GM12878 (cell line): ENCODE measurements at regions of chr10 and their contacts with region 1.

Region 1: GRCh38 chr10:86376852-86377796 is 10.5 kb upstream of the GRID1 start:
- DNase-seq: no peak
- ATAC-seq: peak; percentile 99
- H3K4me3 ChIP-seq: 0 out of 2 replicates have a peak overlapping the region, but pooled peaks have one; percentile 32
- H3K27ac ChIP-seq: no peak overlapping the region
- H3K4me1 ChIP-seq: no peaks in the 10 kb centered on the region
- H3K27me3 ChIP-seq: no peaks in the 10 kb centered on the region; a peak in 1 of 4 replicates
- CTCF ChIP-seq: peak; percentile 91 to 92 (median 91); a peak in 5 of 6 replicates
- EP300 ChIP-seq: no peak
- POLR2A ChIP-seq: no peak
- RAD21 ChIP-seq: peak; percentile 74

Region 2: GRCh38 chr10:85548034-85548433 is 829.1 kb before region 1 on chr10:
- CTCF ChIA-PET with region 1: no interaction called
- POLR2A ChIA-PET with region 1: no interaction called
- RAD21 ChIA-PET with region 1: no interaction called
- SMC1A ChIA-PET with region 1: no interaction called
- in situ Hi-C with region 1: loop called (anchors 10 kb)
- intact Hi-C with region 1: loop called (anchors 5 kb)
- DNase-seq: peak; percentile 35
- ATAC-seq: peak; percentile 96
- H3K4me3 ChIP-seq: no peak overlapping the region
- H3K27ac ChIP-seq: no peak overlapping the region
- H3K4me1 ChIP-seq: no peaks in the 10 kb centered on the region; the same call in 1 of the 2 replicates
- H3K27me3 ChIP-seq: no peaks in the 10 kb centered on the region
- CTCF ChIP-seq: peak; percentile 34 to 47 (median 38); a peak in 4 of 6 replicates
- EP300 ChIP-seq: no peak
- POLR2A ChIP-seq: no peak
- RAD21 ChIP-seq: peak; percentile 58

Region 3: GRCh38 chr10:85995791-85996190 is 381.3 kb before region 1 on chr10:
- CTCF ChIA-PET with region 1: interaction called, 3 read pairs
- POLR2A ChIA-PET with region 1: no interaction called
- RAD21 ChIA-PET with region 1: no interaction called
- SMC1A ChIA-PET with region 1: no interaction called
- in situ Hi-C with region 1: no loop called
- intact Hi-C with region 1: loop called (anchors 1 kb)
- DNase-seq: peak; percentile 20
- ATAC-seq: peak; percentile 83
- H3K4me3 ChIP-seq: no peak overlapping the region
- H3K27ac ChIP-seq: no peak overlapping the region
- H3K4me1 ChIP-seq: no peaks in the 10 kb centered on the region
- H3K27me3 ChIP-seq: 0 out of 4 replicates have a peak, but pooled peaks cover 0 to 2% of the 10 kb centered on the region in 2 experiments
- CTCF ChIP-seq: peak; percentile 43 to 64 (median 49); a peak in 5 of 6 replicates
- EP300 ChIP-seq: no peak
- POLR2A ChIP-seq: no peak
- RAD21 ChIP-seq: peak; percentile 45

Region 4: GRCh38 chr10:86261941-86262687 is 115.0 kb before region 1 on chr10:
- CTCF ChIA-PET with region 1: interaction called, 5 read pairs
- POLR2A ChIA-PET with region 1: no interaction called
- RAD21 ChIA-PET with region 1: no interaction called
- SMC1A ChIA-PET with region 1: no interaction called
- in situ Hi-C with region 1: no loop called
- intact Hi-C with region 1: loop called (anchors 1 kb)
- DNase-seq: peak; percentile 21
- ATAC-seq: peak; percentile 95
- H3K4me3 ChIP-seq: no peak overlapping the region
- H3K27ac ChIP-seq: no peak overlapping the region
- H3K4me1 ChIP-seq: no peaks in the 10 kb centered on the region
- H3K27me3 ChIP-seq: peaks cover 0 to 2% of the 10 kb centered on the region in 2 experiments; a peak in 2 of 4 replicates
- CTCF ChIP-seq: peak; percentile 53 to 57 (median 55); a peak in 5 of 6 replicates
- EP300 ChIP-seq: no peak
- POLR2A ChIP-seq: no peak
- RAD21 ChIP-seq: peak; percentile 41

Region 5: DNA sequence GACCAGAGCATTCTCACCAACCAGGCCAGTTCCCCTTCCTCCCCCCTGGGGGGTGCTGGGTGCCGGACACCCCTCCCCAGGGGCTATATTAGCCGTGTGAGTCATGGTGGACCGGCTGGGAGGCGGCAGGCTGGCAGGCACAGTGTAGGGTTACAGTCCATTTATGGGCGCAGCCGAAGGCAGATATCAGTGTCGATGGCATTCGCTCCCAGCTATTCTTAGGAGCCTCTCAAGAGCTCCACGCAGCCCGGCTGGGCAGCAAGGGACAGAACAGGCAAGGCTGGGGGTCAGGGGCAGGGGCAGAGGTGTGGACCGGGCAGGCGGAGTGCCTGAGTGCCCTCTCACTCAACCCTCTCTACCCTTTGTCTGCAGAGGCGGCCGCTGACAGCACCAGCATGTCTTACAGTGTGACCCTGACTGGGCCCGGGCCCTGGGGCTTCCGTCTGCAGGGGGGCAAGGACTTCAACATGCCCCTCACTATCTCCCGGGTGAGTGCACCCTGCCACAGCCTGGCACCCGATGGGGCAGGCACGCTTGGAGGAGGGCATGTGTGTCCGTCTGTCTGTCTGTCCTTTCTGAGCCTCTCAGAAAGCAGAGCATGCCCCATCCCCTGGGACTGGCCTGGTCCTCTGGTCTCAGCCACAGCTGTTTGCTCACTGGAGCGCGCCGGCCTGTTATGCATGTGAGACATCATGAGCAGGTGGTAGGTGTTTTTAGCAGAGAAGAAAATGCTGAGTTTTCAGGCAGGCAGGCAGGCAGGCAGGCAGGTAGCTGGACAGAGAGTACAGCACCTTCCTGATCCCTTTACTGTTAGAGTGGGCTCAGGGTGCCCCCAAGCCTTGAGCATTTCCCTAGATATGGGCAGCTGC is 291.4 kb after region 1 on chr10 and contains the start of gene LDB3:
- CTCF ChIA-PET with region 1: no interaction called
- POLR2A ChIA-PET with region 1: no interaction called
- RAD21 ChIA-PET with region 1: no interaction called
- SMC1A ChIA-PET with region 1: no interaction called
- in situ Hi-C with region 1: no loop called
- intact Hi-C with region 1: no loop called
- DNase-seq: peak; percentile 25
- ATAC-seq: peak; percentile 83
- H3K4me3 ChIP-seq: no peak within 1 kb of the TSS
- H3K27ac ChIP-seq: no peak within 1 kb of the TSS
- H3K4me1 ChIP-seq: no peaks in the 10 kb centered on the region
- H3K27me3 ChIP-seq: no peaks in the 10 kb centered on the region
- CTCF ChIP-seq: no peak
- EP300 ChIP-seq: 0 out of 4 replicates have a peak, but pooled peaks of 1 of the 2 experiments have one; percentile 39
- POLR2A ChIP-seq: no peak
- RAD21 ChIP-seq: no peak
- polyA plus RNA-seq, gene LDB3: 0.02 to 0.05 TPM